Heart left ventricle (tissue), 16 donors: ENCODE measurements at regions of chr2 and their contacts with region 1.

Region 1: GRCh38 chr2:134897932-134898331 is 20.7 kb upstream of the CCNT2 start:
- DNase-seq: no peak
- ATAC-seq: no peak
- H3K4me3 ChIP-seq: no peak overlapping the region
- H3K27ac ChIP-seq: no peak overlapping the region
- H3K4me1 ChIP-seq: no peaks in the 10 kb centered on the region
- H3K27me3 ChIP-seq: no peaks in the 10 kb centered on the region
- CTCF ChIP-seq: peak; percentile 24 to 68 (median 50)
- POLR2A ChIP-seq: no peak

Region 2: DNA sequence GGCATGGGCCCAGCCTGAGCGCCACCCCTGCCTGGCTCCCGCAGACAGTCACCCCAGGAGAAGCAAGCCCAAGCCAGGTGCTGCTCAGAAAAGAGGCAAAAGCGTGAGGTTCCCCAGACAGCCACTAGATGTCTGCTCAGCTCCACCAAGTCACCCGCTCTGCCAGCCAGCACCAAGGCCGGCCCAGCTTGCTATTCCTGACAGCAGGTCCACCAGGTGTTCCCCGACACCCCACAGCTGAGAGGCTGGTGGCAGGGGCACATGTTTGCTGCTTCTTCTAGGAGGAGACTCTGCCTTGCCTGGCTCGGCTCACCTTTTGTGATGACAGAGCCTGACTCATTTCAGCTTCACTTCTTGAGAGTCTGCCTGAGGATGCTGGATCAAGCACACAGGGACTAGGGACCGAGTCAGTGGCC is 437.3 kb before region 1 on chr2:
- intact Hi-C with region 1: loop called (anchors 2 to 5 kb)
- DNase-seq: peak; percentile 42 to 67 (median 64)
- ATAC-seq: peak; percentile 48 to 83 (median 74)
- H3K4me3 ChIP-seq: no peak overlapping the region
- H3K27ac ChIP-seq: no peak overlapping the region
- H3K4me1 ChIP-seq: peaks cover 0 to 3% (median 0%) of the 10 kb centered on the region in 12 donors
- H3K27me3 ChIP-seq: no peaks in the 10 kb centered on the region
- CTCF ChIP-seq: peak; percentile 45 to 67 (median 58)
- POLR2A ChIP-seq: no peak

Region 3: DNA sequence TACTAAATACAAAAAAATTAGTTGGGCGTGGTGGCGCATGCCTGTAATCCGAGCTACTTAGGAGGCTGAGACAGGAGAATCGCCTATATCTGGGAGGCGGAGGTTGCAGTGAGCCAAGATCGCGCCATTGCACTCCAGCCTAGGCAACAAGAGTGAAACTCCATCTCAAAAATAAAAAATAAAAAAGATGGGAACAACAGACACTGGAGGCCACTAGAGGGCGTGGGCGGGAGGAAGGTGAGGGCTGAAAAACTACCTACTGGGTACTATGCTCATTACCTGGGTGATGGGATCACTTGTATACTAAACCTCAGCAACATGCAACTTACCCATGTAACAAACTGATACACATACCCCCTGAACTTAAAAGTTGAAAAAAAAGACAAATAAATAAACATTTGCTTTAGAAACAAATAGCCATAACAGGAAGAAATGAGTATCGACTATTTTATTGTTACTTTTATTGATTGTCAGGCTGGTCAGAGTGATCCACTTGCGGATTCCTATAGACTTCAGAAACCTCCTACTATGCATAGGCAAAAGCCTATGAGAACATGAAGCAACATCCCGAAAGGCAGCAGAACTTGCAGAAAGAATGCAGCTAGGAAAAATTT is 240.2 kb before region 1 on chr2:
- intact Hi-C with region 1: loop called in 1 of 10 experiments (anchors 10 kb)
- DNase-seq: no peak
- ATAC-seq: no peak
- H3K4me3 ChIP-seq: no peak overlapping the region
- H3K27ac ChIP-seq: no peak overlapping the region
- H3K4me1 ChIP-seq: no peaks in the 10 kb centered on the region
- H3K27me3 ChIP-seq: peaks cover 0 to 3% (median 0%) of the 10 kb centered on the region in 9 donors
- CTCF ChIP-seq: peak; percentile 12 to 53 (median 36)
- POLR2A ChIP-seq: no peak

Region 4: GRCh38 chr2:134782792-134783191 is 115.1 kb before region 1 on chr2:
- intact Hi-C with region 1: loop called in 2 of 10 experiments (anchors 10 kb)
- DNase-seq: no peak
- ATAC-seq: peak in 2 of 4 donors; percentile 38 to 58
- H3K4me3 ChIP-seq: no peak overlapping the region
- H3K27ac ChIP-seq: no peak overlapping the region
- H3K4me1 ChIP-seq: peaks cover 0 to 30% (median 0%) of the 10 kb centered on the region in 12 donors
- H3K27me3 ChIP-seq: no peaks in the 10 kb centered on the region
- CTCF ChIP-seq: peak in 11 of 12 donors; percentile 14 to 41 (median 29)
- POLR2A ChIP-seq: no peak